ENCODE measurements at regions of chr18 and their contacts with region 1.

Region 1: GRCh38 chr18:35407871-35408481 is 30.8 kb upstream of the ZNF396 start:
- DNase-seq: peak; percentile 79
- ATAC-seq: peak; percentile 45
- H3K4me3 ChIP-seq: no peak overlapping the region
- H3K4me3 Mint-ChIP-seq: no peak overlapping the region
- H3K27ac ChIP-seq: no peak overlapping the region
- H3K27ac Mint-ChIP-seq: no peak overlapping the region
- H3K4me1 ChIP-seq: peaks cover 39 to 48% of the 10 kb centered on the region in 2 donors
- H3K4me1 Mint-ChIP-seq: peaks cover 42% of the 10 kb centered on the region
- H3K27me3 ChIP-seq: no peaks in the 10 kb centered on the region
- H3K27me3 Mint-ChIP-seq: no peaks in the 10 kb centered on the region
- CTCF ChIP-seq: peak; percentile 94

Region 2: GRCh38 chr18:34676816-34677574 is 731.0 kb before region 1 on chr18:
- CTCF ChIA-PET with region 1: no interaction called
- POLR2A ChIA-PET with region 1: no interaction called
- intact Hi-C with region 1: no loop called
- DNase-seq: no peak
- ATAC-seq: no peak
- H3K4me3 ChIP-seq: no peak overlapping the region
- H3K4me3 Mint-ChIP-seq: no peak overlapping the region
- H3K27ac ChIP-seq: no peak overlapping the region
- H3K27ac Mint-ChIP-seq: no peak overlapping the region
- H3K4me1 ChIP-seq: no peaks in the 10 kb centered on the region
- H3K4me1 Mint-ChIP-seq: no peaks in the 10 kb centered on the region
- H3K27me3 ChIP-seq: no peaks in the 10 kb centered on the region
- H3K27me3 Mint-ChIP-seq: no peaks in the 10 kb centered on the region
- CTCF ChIP-seq: no peak

Region 3: DNA sequence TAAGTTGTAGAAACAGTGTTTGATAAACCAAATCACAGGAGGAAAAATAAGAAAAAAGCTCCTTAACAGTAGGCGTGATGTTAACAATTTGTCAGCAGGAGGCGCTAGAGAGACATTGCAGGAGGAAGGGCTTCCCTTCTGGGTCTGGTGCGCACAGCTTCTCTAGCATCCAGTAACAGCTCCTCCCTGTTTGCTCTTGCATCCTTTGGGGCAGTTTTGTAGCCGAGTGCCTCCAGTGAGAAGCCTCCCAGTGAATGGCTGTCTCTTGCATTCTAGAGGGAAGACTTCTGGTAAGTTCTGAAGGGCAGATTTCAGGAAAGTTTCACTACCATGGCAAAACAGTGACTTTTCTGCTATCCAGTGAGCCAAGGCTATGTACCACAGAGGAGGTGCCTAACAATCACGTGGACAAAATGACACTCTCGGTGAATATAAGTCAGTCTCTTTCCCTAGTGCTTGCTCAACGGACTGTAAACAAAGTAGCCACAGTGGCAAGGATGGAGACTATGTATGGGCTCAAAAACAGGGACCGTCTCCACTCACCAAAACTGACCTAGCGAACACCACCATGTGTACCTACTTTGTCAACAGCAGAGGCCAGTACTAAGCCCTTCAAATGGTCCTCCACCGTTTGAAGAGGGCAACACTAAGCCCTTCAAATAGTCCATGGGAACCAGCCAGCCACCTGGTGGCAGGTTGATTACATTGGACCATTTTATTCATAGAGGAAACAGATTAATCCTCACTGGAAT is 21.2 kb before region 1 on chr18:
- CTCF ChIA-PET with region 1: interaction called, 9 read pairs
- POLR2A ChIA-PET with region 1: no interaction called
- intact Hi-C with region 1: loop called (anchors 1 kb)
- DNase-seq: peak; percentile 83
- ATAC-seq: peak; percentile 95
- H3K4me3 ChIP-seq: no peak overlapping the region
- H3K4me3 Mint-ChIP-seq: no peak overlapping the region
- H3K27ac ChIP-seq: no peak overlapping the region
- H3K27ac Mint-ChIP-seq: no peak overlapping the region
- H3K4me1 ChIP-seq: peaks cover 5 to 6% of the 10 kb centered on the region in 2 donors
- H3K4me1 Mint-ChIP-seq: peaks cover 9% of the 10 kb centered on the region
- H3K27me3 ChIP-seq: peaks cover 0 to 7% (median 2%) of the 10 kb centered on the region in 4 experiments
- H3K27me3 Mint-ChIP-seq: peaks cover 31% of the 10 kb centered on the region
- CTCF ChIP-seq: peak; percentile 98

Region 4: DNA sequence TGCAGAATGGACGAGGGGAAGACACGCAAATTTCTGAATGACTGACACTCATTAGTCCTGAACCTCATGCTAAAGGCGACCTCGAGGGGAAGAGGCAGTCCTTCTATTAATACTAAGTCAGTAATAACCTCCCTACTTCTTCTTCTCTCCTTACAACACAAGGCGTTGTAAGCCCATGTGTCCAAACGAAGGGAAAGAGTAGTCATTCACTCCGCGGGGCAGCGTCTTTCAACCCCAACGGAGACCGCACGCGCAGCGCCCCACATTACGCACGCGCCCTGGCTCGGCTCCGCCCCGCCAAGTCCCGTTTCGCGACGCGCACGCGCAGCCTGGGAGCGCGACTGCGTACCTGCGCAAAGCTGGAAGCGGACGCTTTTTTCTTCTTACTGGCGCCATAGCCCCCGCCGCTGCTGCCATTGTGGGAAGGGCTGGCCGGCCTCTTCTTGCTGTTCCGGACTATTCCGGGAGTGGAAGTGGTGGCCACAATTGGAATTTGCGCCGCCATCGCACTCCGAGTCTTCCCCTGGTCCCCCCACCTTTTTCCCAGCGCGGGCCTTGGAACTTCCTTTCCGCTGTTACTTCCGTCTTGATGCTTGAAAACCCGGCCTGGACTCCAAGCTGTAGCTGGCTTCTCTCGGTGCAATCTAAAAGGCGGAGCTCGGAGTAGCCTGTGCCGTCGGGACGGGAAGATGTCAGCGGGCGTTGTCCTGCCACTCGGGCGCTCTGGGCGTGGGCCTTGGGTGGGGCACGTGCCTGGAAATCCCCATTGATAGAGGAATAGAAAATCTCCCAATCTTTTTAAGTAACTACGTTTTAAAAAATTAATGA is 89.6 kb after region 1 on chr18 and contains the start of gene INO80C:
- CTCF ChIA-PET with region 1: interaction called, 5 read pairs
- POLR2A ChIA-PET with region 1: interaction called, 7 read pairs
- intact Hi-C with region 1: loop called (anchors 2 kb)
- DNase-seq: peak; percentile 97
- ATAC-seq: peak; percentile 89
- H3K4me3 ChIP-seq: peak within 1 kb of the TSS; percentile 64 to 98 (median 94)
- H3K4me3 Mint-ChIP-seq: peak within 1 kb of the TSS; percentile 94
- H3K27ac ChIP-seq: peak within 1 kb of the TSS; percentile 92 to 95
- H3K27ac Mint-ChIP-seq: peak within 1 kb of the TSS; percentile 99
- H3K4me1 ChIP-seq: peaks cover 21 to 25% of the 10 kb centered on the region in 2 donors
- H3K4me1 Mint-ChIP-seq: peaks cover 53% of the 10 kb centered on the region
- H3K27me3 ChIP-seq: no peaks in the 10 kb centered on the region
- H3K27me3 Mint-ChIP-seq: no peaks in the 10 kb centered on the region
- CTCF ChIP-seq: no peak
- total RNA-seq, gene INO80C: 37.9 and 38.5 TPM in 2 replicates

Region 5: DNA sequence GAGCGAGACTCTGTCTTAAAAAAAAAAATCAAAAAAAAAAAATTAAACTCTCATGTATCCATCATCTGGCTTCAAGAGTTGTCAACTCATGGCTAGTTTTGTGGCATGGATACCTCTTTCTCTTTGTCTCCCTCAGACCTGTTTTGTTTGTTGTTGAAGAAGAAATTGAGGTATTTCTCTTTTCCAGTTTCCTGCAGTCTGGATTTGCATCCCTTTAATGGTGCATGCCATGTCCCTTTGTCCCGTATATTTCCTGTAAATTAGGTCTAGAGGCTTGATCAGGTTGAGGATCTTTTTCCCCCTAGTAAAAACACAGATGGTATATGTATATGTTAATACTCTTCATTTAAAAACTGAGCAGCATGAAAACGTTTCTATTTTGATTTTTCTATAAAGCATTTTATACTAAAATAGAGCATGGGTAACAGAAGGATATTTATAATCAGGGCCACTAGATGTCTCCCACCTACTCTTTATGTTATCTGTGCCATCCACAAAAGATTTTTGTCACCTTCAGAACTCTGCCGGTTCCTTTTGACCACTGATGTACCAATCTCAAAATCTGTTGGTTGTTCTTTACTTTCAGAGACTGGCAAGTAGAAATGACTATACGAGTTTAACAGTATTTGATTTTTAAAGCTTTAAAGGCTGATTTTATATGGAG is 253.6 kb after region 1 on chr18:
- CTCF ChIA-PET with region 1: interaction called, 3 read pairs
- POLR2A ChIA-PET with region 1: no interaction called
- intact Hi-C with region 1: loop called (anchors 10 kb)
- DNase-seq: no peak
- ATAC-seq: no peak
- H3K4me3 ChIP-seq: no peak overlapping the region
- H3K4me3 Mint-ChIP-seq: no peak overlapping the region
- H3K27ac ChIP-seq: no peak overlapping the region
- H3K27ac Mint-ChIP-seq: no peak overlapping the region
- H3K4me1 ChIP-seq: peaks cover 5 to 12% of the 10 kb centered on the region in 2 donors
- H3K4me1 Mint-ChIP-seq: peaks cover 20% of the 10 kb centered on the region
- H3K27me3 ChIP-seq: no peaks in the 10 kb centered on the region
- H3K27me3 Mint-ChIP-seq: no peaks in the 10 kb centered on the region
- CTCF ChIP-seq: no peak

Region 6: GRCh38 chr18:35949903-35950627 is 542.1 kb after region 1 on chr18:
- CTCF ChIA-PET with region 1: interaction called, 5 read pairs
- POLR2A ChIA-PET with region 1: no interaction called
- intact Hi-C with region 1: loop called (anchors 1 kb)
- DNase-seq: peak; percentile 77
- ATAC-seq: peak; percentile 86
- H3K4me3 ChIP-seq: peak overlapping the region; percentile 11 to 56 (median 49)
- H3K4me3 Mint-ChIP-seq: peak overlapping the region; percentile 81
- H3K27ac ChIP-seq: no peak overlapping the region
- H3K27ac Mint-ChIP-seq: no peak overlapping the region
- H3K4me1 ChIP-seq: peaks cover 7 to 8% of the 10 kb centered on the region in 2 donors
- H3K4me1 Mint-ChIP-seq: peaks cover 10% of the 10 kb centered on the region
- H3K27me3 ChIP-seq: peaks cover 0 to 10% (median 7%) of the 10 kb centered on the region in 4 experiments
- H3K27me3 Mint-ChIP-seq: peaks cover 32% of the 10 kb centered on the region
- CTCF ChIP-seq: peak; percentile 99